ENCODE measurements at regions of chr19 and their contacts with region 1.

Region 1: DNA sequence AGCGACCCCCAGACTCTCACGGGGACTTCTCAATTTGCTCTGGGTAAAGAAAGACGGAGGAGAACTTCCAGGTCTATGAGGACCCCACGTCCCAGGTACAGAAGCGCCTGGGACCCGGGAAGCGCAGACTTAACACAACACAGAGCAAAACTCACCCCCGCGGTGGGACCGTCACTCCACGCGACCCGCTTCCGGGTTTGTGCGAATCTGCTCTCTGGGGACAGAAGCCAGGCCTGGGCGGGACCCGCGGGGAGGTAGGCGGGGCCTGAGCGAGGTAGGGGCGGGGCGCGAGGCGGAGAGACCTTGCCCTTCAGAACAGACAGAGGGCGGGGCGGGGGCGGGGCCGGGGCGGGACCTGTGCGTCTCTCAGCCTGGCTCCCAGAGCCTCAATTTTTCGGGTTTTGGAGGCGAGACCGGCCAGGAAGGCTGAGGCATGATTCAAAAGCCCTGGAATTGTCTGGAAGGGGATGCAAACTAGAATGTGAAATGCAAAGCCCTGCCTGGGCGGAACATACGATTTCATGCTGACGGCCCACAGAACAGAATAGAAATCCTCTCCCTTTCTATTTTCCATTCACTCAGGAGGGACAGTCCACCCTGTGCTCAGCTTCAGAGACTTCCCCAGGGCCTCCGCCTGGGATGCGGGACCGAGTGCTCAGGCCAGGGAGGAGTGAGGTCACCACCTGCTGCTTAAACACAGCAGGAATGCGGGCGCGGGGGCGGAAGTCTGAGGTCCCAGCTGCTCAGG is 19.3 kb upstream of the ZNF888 start:
- DNase-seq: peak; percentile 90 to 96 (median 96)
- H3K4me3 ChIP-seq: peak overlapping the region; percentile 88 to 98 (median 92)
- H3K27ac ChIP-seq: peak overlapping the region; percentile 94 to 97
- H3K4me1 ChIP-seq: peaks cover 9 to 48% (median 32%) of the 10 kb centered on the region in 4 experiments
- H3K27me3 ChIP-seq: no peaks in the 10 kb centered on the region

Region 2: GRCh38 chr19:52962394-52963246 is 20.1 kb after region 1 on chr19 and contains the start of gene ZNF816:
- CTCF ChIA-PET with region 1: interaction called, 5 read pairs
- POLR2A ChIA-PET with region 1: interaction called, 15 read pairs
- DNase-seq: peak; percentile 96 to 98 (median 98)
- H3K4me3 ChIP-seq: peak within 1 kb of the TSS; percentile 61 to 95 (median 90)
- H3K27ac ChIP-seq: peak within 1 kb of the TSS; percentile 58 to 85
- H3K4me1 ChIP-seq: peaks cover 8 to 16% (median 11%) of the 10 kb centered on the region in 4 experiments
- H3K27me3 ChIP-seq: no peaks in the 10 kb centered on the region